ENCODE measurements at regions of chr9 and their contacts with region 1.

Region 1: DNA sequence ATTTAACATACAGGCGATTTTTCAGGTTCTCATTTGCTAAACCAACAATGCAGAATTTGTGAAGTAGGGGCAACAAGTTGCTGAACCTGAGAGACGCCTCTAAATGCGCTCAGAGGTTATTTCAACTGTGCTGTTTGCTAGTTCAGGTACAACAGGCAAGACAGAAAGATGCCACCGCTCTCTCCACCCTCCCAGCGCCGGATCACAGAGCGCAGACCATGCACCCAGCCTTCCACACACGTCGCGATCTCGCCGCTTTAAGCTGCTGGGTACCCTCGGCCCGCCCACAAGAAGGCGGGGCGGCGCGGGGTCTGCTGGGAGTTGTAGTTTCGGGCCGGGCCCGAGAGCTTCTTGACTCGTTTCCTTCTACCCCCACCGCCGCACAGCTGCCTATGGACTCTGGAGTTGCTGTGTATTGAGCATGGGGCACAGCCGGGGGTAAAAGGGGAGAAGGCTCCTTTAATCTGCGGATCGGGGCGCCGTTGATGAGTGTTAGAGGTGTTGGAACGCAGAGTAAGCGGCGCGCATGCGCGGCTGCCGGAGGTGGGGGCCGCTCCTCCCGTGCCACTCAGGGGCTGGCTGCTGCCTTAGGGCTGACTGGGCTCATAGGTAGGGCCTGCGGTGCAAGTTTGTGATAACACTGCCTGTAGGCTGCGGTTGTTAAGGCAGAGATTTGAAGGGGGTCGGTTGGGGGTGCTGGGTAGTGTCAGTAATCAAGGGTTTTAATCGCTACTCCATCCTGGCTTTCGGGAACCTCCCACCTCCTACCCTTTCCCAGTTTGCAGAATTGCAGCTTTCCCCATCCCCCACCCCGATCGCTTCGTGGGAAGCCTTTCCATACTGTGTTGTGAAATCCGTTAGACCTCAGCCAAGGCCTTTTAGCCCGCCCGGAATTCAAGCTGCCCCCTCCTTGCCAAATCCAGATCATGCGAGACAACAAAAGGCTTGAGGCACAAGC is 40.3 kb upstream of the ABCA1 start:
- DNase-seq: peak; percentile 88 to 91 (median 88)
- ATAC-seq: peak; percentile 92
- H3K4me3 ChIP-seq: peak overlapping the region; percentile 45 to 80
- H3K27ac ChIP-seq: peak overlapping the region; percentile 77 to 90 (median 84)
- H3K4me1 ChIP-seq: peaks cover 13% of the 10 kb centered on the region
- H3K27me3 ChIP-seq: no peaks in the 10 kb centered on the region
- CTCF ChIP-seq: no peak
- POLR2A ChIP-seq: peak in 2 of 3 donors; percentile 19 to 51

Region 2: DNA sequence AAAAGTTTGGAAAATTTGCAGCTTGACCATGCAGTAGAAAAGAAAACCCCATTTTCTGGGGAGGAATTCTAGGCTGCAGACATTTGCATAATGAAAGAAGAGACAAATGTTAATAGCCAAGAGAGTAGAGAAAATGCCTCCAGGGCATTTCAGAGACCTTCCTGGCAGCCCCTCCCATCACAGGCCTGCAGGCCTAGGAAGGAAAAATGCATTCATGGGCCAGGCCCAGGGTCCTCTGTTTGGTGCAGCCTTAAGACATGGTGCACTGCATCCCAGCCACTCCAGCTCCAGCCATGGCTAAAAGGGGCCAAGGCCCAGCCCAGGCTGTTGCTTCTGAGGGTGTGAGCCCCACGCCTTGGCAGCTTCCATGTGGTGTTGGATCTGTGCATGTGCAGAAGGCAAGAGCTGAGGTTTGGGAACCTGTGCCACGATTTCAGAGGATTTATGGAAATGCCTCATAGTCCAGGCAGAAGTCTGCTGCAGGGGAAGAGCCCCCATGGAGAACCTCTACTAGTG is 539.2 kb before region 1 on chr9:
- intact Hi-C with region 1: no loop called
- DNase-seq: no peak
- ATAC-seq: no peak
- H3K4me3 ChIP-seq: no peak overlapping the region
- H3K27ac ChIP-seq: no peak overlapping the region
- H3K4me1 ChIP-seq: no peaks in the 10 kb centered on the region
- H3K27me3 ChIP-seq: no peaks in the 10 kb centered on the region
- CTCF ChIP-seq: no peak
- POLR2A ChIP-seq: no peak

Region 3: DNA sequence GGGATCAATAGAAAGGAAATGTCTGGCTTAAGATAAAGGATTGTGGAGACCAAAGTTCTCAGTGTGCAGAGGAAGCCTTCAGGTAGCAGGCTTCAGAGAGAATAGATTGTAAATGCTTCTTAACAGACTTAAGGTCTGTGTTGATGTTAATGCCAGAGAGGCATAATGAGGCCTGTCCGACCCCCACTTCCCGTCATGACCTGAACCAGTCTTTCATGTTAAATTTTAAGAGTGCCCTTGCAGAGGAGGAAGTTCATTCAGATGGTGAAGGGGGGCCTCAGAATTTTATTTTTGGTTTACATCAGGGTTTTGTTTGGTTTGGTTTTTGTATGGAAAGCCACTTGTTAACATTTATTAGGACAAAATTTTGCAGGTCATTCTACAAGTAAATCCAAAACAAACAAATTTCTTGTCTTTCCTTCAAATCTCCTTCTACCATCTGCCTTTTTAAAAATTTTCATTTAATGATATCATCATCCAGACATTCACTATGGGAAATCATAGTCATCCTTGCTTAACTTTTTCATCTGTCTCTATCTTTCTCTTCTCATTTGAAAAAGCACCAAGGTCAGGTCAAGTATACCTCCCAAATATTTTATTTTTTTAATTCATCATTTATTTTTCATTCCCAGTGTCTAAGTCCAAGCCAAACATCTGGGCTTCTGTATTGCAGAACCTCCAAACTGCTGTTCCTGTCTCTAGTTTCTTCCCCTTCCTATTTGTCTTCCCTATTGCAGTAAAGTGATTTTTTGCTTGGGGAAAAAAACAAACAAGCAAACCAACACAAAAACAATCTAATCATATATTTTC is 33.4 kb before region 1 on chr9:
- intact Hi-C with region 1: loop called (anchors 5 kb)
- DNase-seq: no peak
- ATAC-seq: no peak
- H3K4me3 ChIP-seq: no peak overlapping the region
- H3K27ac ChIP-seq: no peak overlapping the region
- H3K4me1 ChIP-seq: no peaks in the 10 kb centered on the region
- H3K27me3 ChIP-seq: no peaks in the 10 kb centered on the region
- CTCF ChIP-seq: no peak
- POLR2A ChIP-seq: no peak

Region 4: DNA sequence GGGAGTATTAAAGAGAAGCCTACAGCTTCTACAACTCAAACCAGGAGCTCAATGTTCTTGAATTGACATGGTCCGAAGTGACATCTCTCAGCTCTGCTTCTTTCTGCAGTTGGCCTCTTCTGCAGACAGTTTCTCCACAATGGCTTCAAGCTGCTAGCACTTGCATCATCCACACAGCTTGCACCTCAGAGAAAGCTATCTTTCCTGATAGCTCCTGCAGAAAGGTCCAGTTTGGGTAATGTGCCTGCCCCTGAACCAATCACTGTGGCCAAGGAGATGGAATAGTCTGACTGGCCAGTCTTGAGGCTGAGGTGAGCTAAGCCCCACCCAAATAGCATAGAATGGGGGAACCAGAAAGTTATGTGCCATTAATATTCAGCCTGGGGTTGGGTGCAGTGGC is 55.5 kb after region 1 on chr9:
- intact Hi-C with region 1: no loop called
- DNase-seq: no peak
- ATAC-seq: no peak
- H3K4me3 ChIP-seq: no peak overlapping the region
- H3K27ac ChIP-seq: no peak overlapping the region
- H3K4me1 ChIP-seq: no peaks in the 10 kb centered on the region
- H3K27me3 ChIP-seq: no peaks in the 10 kb centered on the region
- CTCF ChIP-seq: no peak
- POLR2A ChIP-seq: no peak

Region 5: DNA sequence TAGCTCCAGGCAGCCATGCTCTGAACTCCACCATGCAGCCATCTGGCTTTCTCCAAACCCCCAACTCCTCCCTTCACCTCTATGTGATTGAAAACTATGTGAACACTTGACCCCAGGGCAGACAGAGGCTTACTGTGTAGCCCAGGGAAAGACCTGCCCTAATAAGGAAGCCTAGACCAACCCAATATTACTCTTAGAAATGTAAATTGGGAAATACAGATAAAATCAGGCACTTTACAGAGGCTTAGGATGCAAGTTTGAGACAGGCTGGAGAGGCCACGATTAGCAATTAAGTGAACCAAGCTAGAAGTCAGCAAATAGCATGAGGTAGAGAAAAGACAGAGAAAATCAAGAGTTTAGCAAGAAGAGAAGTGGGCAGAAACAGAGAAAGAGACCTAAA is 101.4 kb after region 1 on chr9:
- intact Hi-C with region 1: loop called (anchors 10 kb)
- DNase-seq: no peak
- ATAC-seq: no peak
- H3K4me3 ChIP-seq: no peak overlapping the region
- H3K27ac ChIP-seq: no peak overlapping the region
- H3K4me1 ChIP-seq: peaks cover 15% of the 10 kb centered on the region
- H3K27me3 ChIP-seq: no peaks in the 10 kb centered on the region
- CTCF ChIP-seq: no peak
- POLR2A ChIP-seq: no peak

Region 6: GRCh38 chr9:105858006-105858690 is 889.8 kb after region 1 on chr9:
- intact Hi-C with region 1: no loop called
- DNase-seq: no peak
- ATAC-seq: no peak
- H3K4me3 ChIP-seq: no peak overlapping the region
- H3K27ac ChIP-seq: no peak overlapping the region
- H3K4me1 ChIP-seq: no peaks in the 10 kb centered on the region
- H3K27me3 ChIP-seq: no peaks in the 10 kb centered on the region
- CTCF ChIP-seq: no peak
- POLR2A ChIP-seq: no peak

Measured in body of pancreas (tissue), 4 donors.